Naive thymus-derived CD4-positive, alpha-beta T cell (primary cell): ENCODE measurements at regions of chr1 and their contacts with region 1.

Region 1: DNA sequence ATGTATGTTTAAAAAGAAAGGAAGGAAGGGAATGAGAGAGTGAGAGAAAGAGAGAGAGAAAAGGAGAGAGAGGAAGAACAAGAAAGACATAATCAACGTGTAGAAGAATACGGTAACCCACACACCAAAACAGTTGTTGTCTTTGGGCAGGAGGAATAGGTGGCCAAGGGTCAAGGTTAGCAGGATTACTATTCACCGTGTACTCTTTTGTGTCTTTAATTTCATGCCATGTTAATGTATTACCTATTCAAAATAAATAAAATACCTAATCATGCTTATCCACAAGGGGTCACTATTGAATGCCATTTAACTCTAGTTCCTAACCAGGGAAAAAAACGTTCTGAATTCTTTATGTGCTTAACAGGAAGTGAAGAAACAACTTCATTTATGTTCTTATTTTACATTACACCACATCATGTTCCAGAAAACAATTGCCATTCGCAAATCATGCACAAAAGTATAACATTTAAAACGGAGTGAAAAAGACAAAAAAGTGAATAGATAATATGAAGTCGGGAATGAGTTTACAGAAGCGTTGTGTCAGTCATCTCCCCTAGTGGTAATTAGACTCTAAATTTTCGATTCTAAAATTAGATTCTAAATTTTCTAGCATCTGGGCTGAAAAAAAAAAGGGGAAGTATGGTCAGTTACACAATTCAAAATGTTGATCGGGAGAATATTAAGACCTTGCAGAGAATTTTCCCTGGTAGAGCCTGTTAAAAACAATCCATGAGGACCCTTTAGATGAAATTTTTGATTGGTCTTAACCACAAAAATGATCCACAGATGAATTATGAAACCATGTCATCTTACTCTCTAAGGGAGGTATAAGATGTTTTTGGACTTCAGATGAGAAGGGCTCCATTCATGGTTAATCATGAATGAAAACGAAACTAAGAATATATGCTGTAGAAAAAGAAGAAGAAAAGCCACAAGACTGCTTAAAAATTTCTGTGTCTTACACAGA is 700 bp upstream of the KMO start:
- DNase-seq: peak in 7 of 9 donors; percentile 34 to 77 (median 67)
- ATAC-seq: peak; percentile 92
- H3K4me3 ChIP-seq: peak overlapping the region; percentile 71
- H3K4me3 Mint-ChIP-seq: peak overlapping the region; percentile 86 to 99 (median 92)
- H3K27ac ChIP-seq: peak overlapping the region; percentile 54
- H3K27ac Mint-ChIP-seq: peak overlapping the region; percentile 49 to 93 (median 83)
- H3K4me1 ChIP-seq: peaks cover 4 to 6% of the 10 kb centered on the region in 2 donors
- H3K4me1 Mint-ChIP-seq: peaks cover 8 to 16% (median 13%) of the 10 kb centered on the region in 7 donors
- H3K27me3 ChIP-seq: no peaks in the 10 kb centered on the region
- H3K27me3 Mint-ChIP-seq: peaks cover 0 to 37% (median 0%) of the 10 kb centered on the region in 5 donors

Region 2: GRCh38 chr1:241396747-241397681 is 134.5 kb before region 1 on chr1:
- CTCF ChIA-PET with region 1: no interaction called
- POLR2A ChIA-PET with region 1: no interaction called
- intact Hi-C with region 1: no loop called
- DNase-seq: no peak
- ATAC-seq: no peak
- H3K4me3 ChIP-seq: no peak overlapping the region
- H3K4me3 Mint-ChIP-seq: no peak overlapping the region
- H3K27ac ChIP-seq: no peak overlapping the region
- H3K27ac Mint-ChIP-seq: no peak overlapping the region
- H3K4me1 ChIP-seq: no peaks in the 10 kb centered on the region
- H3K4me1 Mint-ChIP-seq: no peaks in the 10 kb centered on the region
- H3K27me3 ChIP-seq: no peaks in the 10 kb centered on the region
- H3K27me3 Mint-ChIP-seq: peaks cover 0 to 20% (median 5%) of the 10 kb centered on the region in 5 donors

Region 3: GRCh38 chr1:241519308-241520079 is 12.0 kb before region 1 on chr1 and contains the start of gene FH:
- CTCF ChIA-PET with region 1: interaction called, 5 read pairs
- POLR2A ChIA-PET with region 1: interaction called, 5 read pairs
- intact Hi-C with region 1: loop called (anchors 1 kb)
- DNase-seq: peak; percentile 83 to 96 (median 94)
- ATAC-seq: peak; percentile 99
- H3K4me3 ChIP-seq: peak within 1 kb of the TSS; percentile 66
- H3K4me3 Mint-ChIP-seq: peak within 1 kb of the TSS in 8 of 10 donors; percentile 85 to 96 (median 92)
- H3K27ac ChIP-seq: peak within 1 kb of the TSS; percentile 82
- H3K27ac Mint-ChIP-seq: peak within 1 kb of the TSS; percentile 56 to 92 (median 82)
- H3K4me1 ChIP-seq: peaks cover 5 to 6% of the 10 kb centered on the region in 2 donors
- H3K4me1 Mint-ChIP-seq: peaks cover 2 to 46% (median 38%) of the 10 kb centered on the region in 7 donors
- H3K27me3 ChIP-seq: no peaks in the 10 kb centered on the region
- H3K27me3 Mint-ChIP-seq: peaks cover 15 to 28% (median 26%) of the 10 kb centered on the region in 5 donors
- total RNA-seq, gene FH: 17.3 to 57.9 (median 21.8) TPM

Region 4: DNA sequence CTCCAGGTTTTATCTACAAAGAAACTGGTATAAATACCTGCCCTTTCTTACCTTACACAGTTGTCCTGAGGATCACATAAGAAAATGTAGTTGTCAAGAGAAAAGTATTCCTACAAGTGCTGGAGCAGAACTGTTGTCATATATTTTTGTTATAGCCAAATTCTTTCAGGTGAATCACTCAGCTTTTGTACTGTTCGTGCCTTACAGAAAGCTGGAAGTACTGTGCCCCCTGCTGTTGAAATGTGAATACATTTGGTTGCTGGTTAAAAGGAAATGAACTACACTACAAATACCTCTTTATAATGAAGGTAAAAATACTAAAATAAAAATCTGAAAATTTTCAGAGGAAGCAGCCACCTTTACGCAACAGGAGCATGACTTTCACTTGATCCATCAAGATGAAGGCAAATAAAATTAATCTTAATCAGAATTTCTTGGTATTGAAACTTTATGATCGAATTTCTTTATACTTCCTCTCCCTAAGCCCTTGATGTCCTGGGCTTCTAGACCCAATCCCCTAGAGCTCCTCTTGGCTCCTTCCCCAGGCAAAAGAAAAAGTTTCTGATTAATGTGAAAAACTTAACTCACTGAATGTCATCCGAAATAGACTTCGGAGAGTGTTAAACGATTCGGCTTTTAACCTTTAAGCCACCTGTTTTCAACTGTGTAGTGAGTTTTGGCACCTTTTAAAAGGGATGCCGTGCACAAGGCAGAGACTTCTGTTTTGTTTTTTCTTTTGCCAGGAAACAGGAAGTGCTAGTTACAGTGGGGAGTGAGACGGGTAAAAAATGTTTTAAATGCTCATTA is 96.2 kb after region 1 on chr1:
- CTCF ChIA-PET with region 1: interaction called, 6 read pairs
- POLR2A ChIA-PET with region 1: no interaction called
- intact Hi-C with region 1: loop called (anchors 1 kb)
- DNase-seq: peak in 7 of 9 donors; percentile 59 to 81 (median 72)
- ATAC-seq: peak; percentile 90
- H3K4me3 ChIP-seq: peak overlapping the region; percentile 37
- H3K4me3 Mint-ChIP-seq: peak overlapping the region; percentile 55 to 87 (median 84)
- H3K27ac ChIP-seq: peak overlapping the region; percentile 70
- H3K27ac Mint-ChIP-seq: peak overlapping the region; percentile 87 to 96 (median 92)
- H3K4me1 ChIP-seq: peaks cover 0 to 9% of the 10 kb centered on the region in 2 donors
- H3K4me1 Mint-ChIP-seq: peaks cover 6 to 33% (median 25%) of the 10 kb centered on the region in 7 donors
- H3K27me3 ChIP-seq: no peaks in the 10 kb centered on the region
- H3K27me3 Mint-ChIP-seq: no peaks in the 10 kb centered on the region

Region 5: DNA sequence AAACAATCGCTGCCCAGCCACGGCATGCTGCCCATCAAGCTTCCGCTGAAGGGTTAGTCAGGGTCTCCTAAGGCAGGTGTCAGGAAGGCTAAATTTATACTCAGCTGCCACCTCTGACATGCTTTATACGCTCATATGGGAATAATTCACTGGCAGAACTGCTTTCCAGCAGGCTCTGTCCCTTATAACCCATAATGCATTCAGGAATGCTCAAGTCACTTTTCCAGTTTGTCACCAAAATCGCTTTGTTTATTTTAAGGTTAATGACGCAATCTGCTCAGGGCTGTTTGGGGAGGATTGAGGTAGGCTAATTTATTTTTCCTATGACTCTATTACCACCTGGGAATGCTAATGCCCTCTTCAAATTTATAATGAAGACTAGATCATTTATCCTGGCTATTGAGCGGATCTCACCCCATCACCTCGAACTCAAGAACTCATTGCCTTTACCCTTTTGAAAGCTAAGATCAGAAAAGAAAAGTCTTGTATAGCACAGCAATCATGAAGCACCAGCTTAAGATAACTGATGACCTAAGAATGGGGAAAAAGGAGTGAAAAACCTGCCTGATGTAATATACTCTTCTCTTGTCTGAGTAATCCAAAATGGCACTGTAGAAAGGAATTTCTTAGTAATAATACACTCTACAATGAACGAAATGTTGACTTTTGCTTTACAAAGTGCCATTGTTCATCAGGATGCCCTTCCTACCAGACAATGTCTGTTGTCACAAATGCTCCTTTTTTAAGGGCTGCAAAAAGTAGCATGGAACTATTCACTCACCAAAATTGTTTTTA is 218.6 kb after region 1 on chr1:
- CTCF ChIA-PET with region 1: no interaction called
- POLR2A ChIA-PET with region 1: no interaction called
- intact Hi-C with region 1: loop called in 1 of 2 experiments (anchors 10 kb)
- DNase-seq: no peak
- ATAC-seq: no peak
- H3K4me3 ChIP-seq: no peak overlapping the region
- H3K4me3 Mint-ChIP-seq: no peak overlapping the region
- H3K27ac ChIP-seq: no peak overlapping the region
- H3K27ac Mint-ChIP-seq: no peak overlapping the region
- H3K4me1 ChIP-seq: no peaks in the 10 kb centered on the region
- H3K4me1 Mint-ChIP-seq: no peaks in the 10 kb centered on the region
- H3K27me3 ChIP-seq: no peaks in the 10 kb centered on the region
- H3K27me3 Mint-ChIP-seq: peaks cover 0 to 5% (median 0%) of the 10 kb centered on the region in 5 donors

Region 6: GRCh38 chr1:241895013-241895412 is 363.5 kb after region 1 on chr1:
- CTCF ChIA-PET with region 1: no interaction called
- POLR2A ChIA-PET with region 1: no interaction called
- intact Hi-C with region 1: loop called (anchors 1 kb)
- DNase-seq: no peak
- ATAC-seq: no peak
- H3K4me3 ChIP-seq: no peak overlapping the region
- H3K4me3 Mint-ChIP-seq: no peak overlapping the region
- H3K27ac ChIP-seq: no peak overlapping the region
- H3K27ac Mint-ChIP-seq: no peak overlapping the region
- H3K4me1 ChIP-seq: no peaks in the 10 kb centered on the region
- H3K4me1 Mint-ChIP-seq: no peaks in the 10 kb centered on the region
- H3K27me3 ChIP-seq: no peaks in the 10 kb centered on the region
- H3K27me3 Mint-ChIP-seq: no peaks in the 10 kb centered on the region

Region 7: DNA sequence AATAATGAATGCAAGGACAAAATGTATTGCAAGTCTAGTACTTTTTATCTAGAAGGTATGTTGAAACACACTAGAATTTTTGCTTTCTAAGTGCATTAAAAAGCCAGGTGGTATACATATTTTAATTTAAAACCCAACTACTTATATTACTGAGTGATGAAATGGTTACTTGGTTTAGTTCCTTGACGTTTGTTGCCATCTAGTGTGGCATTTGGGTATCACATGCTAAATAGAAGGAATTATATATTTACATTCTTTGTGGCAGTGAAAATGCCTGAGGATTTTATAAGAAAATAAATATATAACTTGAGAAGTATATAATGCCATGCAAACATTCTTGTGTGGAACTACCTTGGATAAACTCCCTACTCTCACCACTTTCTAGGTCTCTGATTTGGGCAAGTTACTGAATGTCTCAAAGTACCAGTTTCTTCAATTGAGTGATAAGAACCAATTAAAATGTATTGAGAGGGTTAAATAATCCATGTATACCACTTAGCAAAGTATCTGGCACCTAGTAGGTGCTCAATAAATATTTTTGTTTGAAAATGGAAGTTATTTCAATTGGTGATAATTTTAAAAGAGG is 1793.9 kb after region 1 on chr1:
- CTCF ChIA-PET with region 1: no interaction called
- POLR2A ChIA-PET with region 1: no interaction called
- intact Hi-C with region 1: loop called in 1 of 2 experiments (anchors 1 kb)
- DNase-seq: peak in 7 of 9 donors; percentile 27 to 61 (median 44)
- ATAC-seq: peak; percentile 66
- H3K4me3 ChIP-seq: no peak overlapping the region
- H3K4me3 Mint-ChIP-seq: no peak overlapping the region
- H3K27ac ChIP-seq: no peak overlapping the region
- H3K27ac Mint-ChIP-seq: no peak overlapping the region
- H3K4me1 ChIP-seq: no peaks in the 10 kb centered on the region
- H3K4me1 Mint-ChIP-seq: peaks cover 0 to 2% (median 0%) of the 10 kb centered on the region in 7 donors
- H3K27me3 ChIP-seq: no peaks in the 10 kb centered on the region
- H3K27me3 Mint-ChIP-seq: no peaks in the 10 kb centered on the region